ENCODE measurements at regions of chr20 and their contacts with region 1.

Region 1: DNA sequence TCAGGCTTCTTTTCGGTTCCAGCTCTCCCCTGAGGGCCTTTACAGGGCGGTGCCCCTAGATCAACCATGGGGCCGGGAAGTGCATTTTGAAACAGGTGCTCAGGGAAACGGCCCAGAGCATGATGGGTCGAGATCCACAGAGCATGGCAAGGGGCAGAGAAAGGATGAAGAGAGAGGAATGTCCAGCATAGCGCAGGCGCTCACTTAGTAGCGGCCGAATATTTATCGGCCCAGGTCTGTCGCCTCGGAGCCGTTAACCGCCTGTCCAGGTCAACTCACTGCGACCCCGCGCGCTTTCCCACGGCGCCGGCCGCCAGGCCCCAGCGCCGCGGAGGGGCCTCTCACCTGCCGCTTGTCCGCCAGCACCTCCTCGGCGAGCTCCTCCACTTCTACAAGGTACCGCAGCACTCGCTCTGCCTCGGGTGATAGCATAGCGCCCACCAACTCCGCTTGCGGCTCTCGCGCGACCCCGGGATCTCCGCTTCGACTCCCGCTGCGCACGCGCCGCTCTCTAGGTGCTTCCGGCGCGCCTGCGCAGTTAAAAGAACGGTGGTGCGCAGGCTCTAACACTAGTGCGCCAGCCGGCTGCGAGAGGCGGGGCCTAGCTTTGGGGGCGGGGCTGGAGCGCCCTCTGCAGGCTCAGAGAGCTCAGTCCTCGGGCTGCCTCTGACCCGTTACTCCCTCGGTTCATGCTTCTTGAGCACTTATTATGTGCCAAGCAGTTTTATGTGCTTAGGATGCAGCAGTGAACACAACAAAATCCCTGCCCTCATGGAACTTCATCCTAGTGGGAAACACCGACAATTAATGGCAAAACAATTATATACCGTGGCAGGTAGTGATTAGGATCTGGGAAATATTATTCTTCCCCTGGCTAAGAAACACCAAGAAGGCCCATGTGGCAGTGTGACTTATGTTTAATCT is at the start of gene PDRG1:
- ATAC-seq: peak; percentile 83 to 98 (median 96)
- H3K4me3 ChIP-seq: peak within 1 kb of the TSS; percentile 60 to 95 (median 88)
- H3K27ac ChIP-seq: peak within 1 kb of the TSS; percentile 75 to 77
- H3K4me1 ChIP-seq: peaks cover 7 to 8% of the 10 kb centered on the region in 2 donors
- total RNA-seq, gene PDRG1: 16.4 to 46.5 (median 22.2) TPM

Region 2: GRCh38 chr20:31861346-31862156 is 90.2 kb before region 1 on chr20:
- in situ Hi-C with region 1: loop called in 2 of 9 experiments (anchors 10 to 25 kb)
- ATAC-seq: peak; percentile 67 to 94 (median 84)
- H3K4me3 ChIP-seq: peak overlapping the region; percentile 42 to 61 (median 45)
- H3K27ac ChIP-seq: peak overlapping the region; percentile 82 to 87
- H3K4me1 ChIP-seq: peaks cover 16 to 24% of the 10 kb centered on the region in 2 donors

Region 3: GRCh38 chr20:32052090-32052777 is 100.4 kb after region 1 on chr20 and contains the start of gene HCK:
- in situ Hi-C with region 1: loop called in 1 of 9 experiments (anchors 25 kb)
- ATAC-seq: peak; percentile 42 to 78 (median 56)
- H3K4me3 ChIP-seq: peak within 1 kb of the TSS in 1 of 5 donors; percentile 16
- H3K27ac ChIP-seq: no peak within 1 kb of the TSS
- H3K4me1 ChIP-seq: no peaks in the 10 kb centered on the region
- total RNA-seq, gene HCK: 0.11 to 73.4 (median 0.56) TPM

Region 4: GRCh38 chr20:32560989-32561830 is 609.4 kb after region 1 on chr20:
- in situ Hi-C with region 1: no loop called
- ATAC-seq: peak; percentile 26 to 75 (median 65)
- H3K4me3 ChIP-seq: peak overlapping the region in 1 of 5 donors; percentile 13
- H3K27ac ChIP-seq: peak overlapping the region; percentile 75 to 84
- H3K4me1 ChIP-seq: peaks cover 44 to 51% of the 10 kb centered on the region in 2 donors

Measured in motor neuron (in vitro differentiated cells).